Heart left ventricle (tissue), 16 donors: ENCODE measurements at regions of chr2 and their contacts with region 1.

Region 1: DNA sequence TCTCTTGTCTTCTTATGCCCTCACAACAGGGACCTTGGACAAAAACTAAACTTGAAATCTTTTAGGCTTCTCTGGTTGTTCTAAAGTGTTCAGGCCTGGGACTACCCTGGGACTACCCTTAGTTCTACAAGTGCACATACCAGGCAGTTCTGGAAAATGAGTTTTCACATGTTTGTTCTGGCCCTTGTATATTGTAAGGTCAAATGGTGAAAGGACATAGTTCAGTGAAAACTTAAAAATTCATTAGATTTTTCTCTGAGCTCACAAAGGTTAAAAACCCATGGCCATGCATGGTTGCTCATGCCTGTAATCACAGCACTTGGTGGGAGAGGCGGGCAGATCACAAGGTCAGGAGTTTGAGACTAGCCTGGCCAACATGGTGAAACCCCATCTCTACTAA is 875.5 kb upstream of the FAM98A start:
- DNase-seq: no peak
- ATAC-seq: no peak
- H3K4me3 ChIP-seq: no peak overlapping the region
- H3K27ac ChIP-seq: no peak overlapping the region
- H3K4me1 ChIP-seq: no peaks in the 10 kb centered on the region
- H3K27me3 ChIP-seq: no peaks in the 10 kb centered on the region
- CTCF ChIP-seq: no peak
- POLR2A ChIP-seq: no peak

Region 2: GRCh38 chr2:34266908-34267697 is 207.5 kb before region 1 on chr2:
- intact Hi-C with region 1: no loop called
- DNase-seq: no peak
- ATAC-seq: no peak
- H3K4me3 ChIP-seq: no peak overlapping the region
- H3K27ac ChIP-seq: no peak overlapping the region
- H3K4me1 ChIP-seq: no peaks in the 10 kb centered on the region
- H3K27me3 ChIP-seq: no peaks in the 10 kb centered on the region
- CTCF ChIP-seq: no peak
- POLR2A ChIP-seq: no peak

Region 3: GRCh38 chr2:34519659-34520058 is 45.0 kb after region 1 on chr2:
- intact Hi-C with region 1: loop called in 2 of 10 experiments (anchors 5 kb)
- DNase-seq: no peak
- ATAC-seq: no peak
- H3K4me3 ChIP-seq: no peak overlapping the region
- H3K27ac ChIP-seq: no peak overlapping the region
- H3K4me1 ChIP-seq: no peaks in the 10 kb centered on the region
- H3K27me3 ChIP-seq: no peaks in the 10 kb centered on the region
- CTCF ChIP-seq: no peak
- POLR2A ChIP-seq: no peak

Region 4: DNA sequence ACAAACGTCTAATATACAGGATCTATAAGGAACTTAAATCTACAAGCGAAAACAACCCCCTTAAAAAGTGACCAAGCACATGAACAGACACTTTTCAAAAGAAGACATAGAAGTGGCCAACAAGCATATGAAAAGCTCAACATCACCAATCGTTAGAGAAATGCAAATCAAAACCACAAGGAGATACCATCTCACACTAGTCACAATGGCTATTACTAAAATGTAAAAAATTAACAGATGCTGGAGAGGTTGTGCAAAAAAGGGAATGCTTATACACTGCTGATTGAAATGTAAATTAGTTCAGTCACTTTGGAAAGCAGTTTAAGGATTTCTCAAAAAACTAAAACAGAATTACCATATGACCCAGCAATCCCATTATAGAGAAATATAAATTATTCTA is 273.0 kb after region 1 on chr2:
- intact Hi-C with region 1: loop called in 1 of 10 experiments (anchors 10 kb)
- DNase-seq: no peak
- ATAC-seq: no peak
- H3K4me3 ChIP-seq: no peak overlapping the region
- H3K27ac ChIP-seq: no peak overlapping the region
- H3K4me1 ChIP-seq: no peaks in the 10 kb centered on the region
- H3K27me3 ChIP-seq: no peaks in the 10 kb centered on the region
- CTCF ChIP-seq: no peak
- POLR2A ChIP-seq: no peak